Calu3 (cell line): ENCODE measurements at regions of chr3 and their contacts with region 1.

Region 1: DNA sequence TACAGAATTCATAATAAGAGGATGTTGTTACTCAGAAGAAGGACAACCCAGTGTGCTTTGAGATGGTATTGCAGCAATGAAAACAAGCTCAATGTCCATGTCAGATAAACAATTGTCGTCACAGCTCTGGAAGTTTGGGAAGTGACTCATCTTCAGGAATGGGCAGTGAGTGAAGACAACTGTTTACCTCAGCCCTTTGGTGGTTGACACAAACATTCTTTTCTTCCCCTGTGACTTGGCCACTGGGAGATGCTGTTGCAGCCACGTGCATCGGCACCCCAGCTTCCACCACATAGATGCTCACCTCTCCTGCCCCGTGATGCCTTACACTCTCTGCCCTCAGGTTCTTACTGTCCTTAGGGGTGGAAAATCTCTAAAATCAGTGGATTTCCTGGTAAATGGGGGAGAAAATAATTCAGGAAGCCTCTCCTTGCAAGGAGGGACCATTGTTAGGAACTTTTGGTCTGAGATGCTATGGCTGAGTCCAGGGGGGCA is 114.1 kb upstream of the GALNT15 start:
- DNase-seq: peak; percentile 60
- H3K4me3 Mint-ChIP-seq: no peak overlapping the region
- H3K27ac Mint-ChIP-seq: peak overlapping the region; percentile 11
- H3K4me1 Mint-ChIP-seq: peaks cover 42% of the 10 kb centered on the region
- H3K27me3 Mint-ChIP-seq: no peaks in the 10 kb centered on the region
- CTCF ChIP-seq: no peak

Region 2: DNA sequence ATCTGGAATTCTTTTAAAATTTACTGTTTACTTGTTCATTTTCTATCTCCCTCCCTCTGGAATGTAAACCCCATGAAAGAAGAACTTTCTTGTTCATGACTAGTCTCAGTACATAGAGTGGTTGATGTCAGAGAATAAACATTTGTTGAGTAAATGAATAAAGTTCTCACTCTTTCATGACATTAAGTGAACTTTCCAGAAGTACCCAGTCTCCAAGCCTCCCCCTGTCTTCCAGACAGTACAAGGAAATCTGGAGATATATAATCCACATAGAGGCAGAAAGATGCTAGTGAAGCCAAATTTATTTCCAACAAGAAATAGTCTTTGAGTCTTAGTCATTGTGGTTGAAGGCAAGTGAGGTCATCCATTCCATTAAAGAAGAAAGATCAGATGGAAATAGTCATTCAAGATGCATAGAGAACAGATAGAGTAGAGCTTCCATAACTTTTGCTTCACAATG is 42.5 kb after region 1 on chr3:
- CTCF ChIA-PET with region 1: no interaction called
- intact Hi-C with region 1: loop called (anchors 5 kb)
- DNase-seq: no peak
- H3K4me3 Mint-ChIP-seq: no peak overlapping the region
- H3K27ac Mint-ChIP-seq: peak overlapping the region; percentile 97
- H3K4me1 Mint-ChIP-seq: peaks cover 24% of the 10 kb centered on the region
- H3K27me3 Mint-ChIP-seq: no peaks in the 10 kb centered on the region
- CTCF ChIP-seq: no peak

Region 3: DNA sequence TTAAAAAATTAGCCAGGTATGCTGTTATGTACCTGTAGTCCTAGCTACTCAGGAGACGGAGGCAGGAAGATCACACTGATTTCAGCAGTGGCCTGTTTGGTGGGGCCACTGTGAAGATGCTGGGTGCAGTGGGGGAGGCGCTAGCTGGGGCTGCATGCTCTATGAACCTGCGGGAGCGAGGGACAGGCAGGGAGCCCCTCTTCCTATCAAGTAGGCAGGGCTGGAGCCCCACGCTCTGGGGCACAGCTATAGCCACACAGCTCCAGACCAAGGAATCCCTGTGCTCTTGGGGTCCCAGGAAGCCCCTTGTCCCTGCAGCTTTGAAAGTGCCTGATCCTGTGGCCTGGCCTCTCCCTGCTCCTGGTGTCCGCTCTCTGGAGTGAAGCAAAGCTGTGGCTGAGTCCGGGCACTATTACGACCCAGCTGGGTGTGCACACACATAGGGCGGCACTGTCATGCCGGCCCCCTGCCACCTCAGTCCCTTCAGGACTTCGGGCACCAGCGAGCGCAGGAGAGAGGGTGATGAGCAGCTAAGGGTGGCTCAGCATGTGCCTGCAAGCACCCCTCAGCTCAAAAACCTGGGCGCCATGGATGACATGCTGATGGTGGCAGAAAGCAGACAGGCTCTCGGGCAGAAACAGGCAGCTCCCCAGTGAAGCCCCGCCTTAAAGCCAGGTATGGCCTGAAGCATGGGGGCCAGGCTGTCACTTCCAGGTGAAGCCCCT is 1419.4 kb after region 1 on chr3:
- CTCF ChIA-PET with region 1: interaction called, 11 read pairs
- intact Hi-C with region 1: no loop called
- DNase-seq: no peak
- H3K4me3 Mint-ChIP-seq: no peak overlapping the region
- H3K27ac Mint-ChIP-seq: no peak overlapping the region
- H3K4me1 Mint-ChIP-seq: no peaks in the 10 kb centered on the region
- H3K27me3 Mint-ChIP-seq: no peaks in the 10 kb centered on the region
- CTCF ChIP-seq: no peak